ENCODE measurements at regions of chr6 and their contacts with region 1.

Region 1: DNA sequence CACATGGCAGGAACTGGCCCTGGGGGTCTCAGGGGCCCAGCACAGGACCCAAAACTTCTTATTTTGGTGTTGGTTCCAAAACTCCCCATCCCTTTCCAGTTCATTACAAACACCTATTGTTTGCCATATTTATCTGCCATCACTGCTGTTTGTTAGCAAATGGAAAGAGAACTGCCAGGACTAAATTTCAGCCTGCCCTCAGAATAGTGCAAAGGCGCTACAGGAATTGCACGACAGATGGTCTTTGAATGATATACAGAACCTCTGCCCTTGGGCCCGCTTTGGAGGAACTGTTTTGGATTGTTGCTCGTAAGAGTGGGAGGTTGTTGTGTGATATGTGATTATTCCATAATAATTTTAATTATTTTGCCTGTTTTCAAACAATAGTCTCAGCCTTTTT is 199.0 kb upstream of the FBXL4 start:
- DNase-seq: no peak
- H3K4me3 ChIP-seq: no peak overlapping the region
- H3K27ac ChIP-seq: no peak overlapping the region
- H3K4me1 ChIP-seq: no peaks in the 10 kb centered on the region; a peak in 1 of 4 replicates
- H3K27me3 ChIP-seq: no peaks in the 10 kb centered on the region
- CTCF ChIP-seq: no peak
- EP300 ChIP-seq: no peak
- RAD21 ChIP-seq: no peak

Region 2: GRCh38 chr6:99241905-99242534 is 95.3 kb after region 1 on chr6:
- CTCF ChIA-PET with region 1: interaction called, 36 read pairs
- POLR2A ChIA-PET with region 1: no interaction called
- DNase-seq: peak; percentile 19
- H3K4me3 ChIP-seq: no peak overlapping the region
- H3K27ac ChIP-seq: no peak overlapping the region
- H3K4me1 ChIP-seq: no peaks in the 10 kb centered on the region
- H3K27me3 ChIP-seq: no peaks in the 10 kb centered on the region
- CTCF ChIP-seq: peak; percentile 58
- EP300 ChIP-seq: no peak
- RAD21 ChIP-seq: peak; percentile 64

Region 3: GRCh38 chr6:99434702-99435530 is 288.2 kb after region 1 on chr6:
- CTCF ChIA-PET with region 1: no interaction called
- POLR2A ChIA-PET with region 1: no interaction called
- DNase-seq: peak; percentile 15
- H3K4me3 ChIP-seq: no peak overlapping the region
- H3K27ac ChIP-seq: no peak overlapping the region
- H3K4me1 ChIP-seq: peaks cover 0 to 5% of the 10 kb centered on the region in 2 experiments; a peak in 1 of 4 replicates
- H3K27me3 ChIP-seq: no peaks in the 10 kb centered on the region
- CTCF ChIP-seq: peak; percentile 64
- EP300 ChIP-seq: no peak
- RAD21 ChIP-seq: no peak

Measured in SK-N-SH (cell line).